AG04450 (cell line): ENCODE measurements at regions of chr22 and their contacts with region 1.

Region 1: GRCh38 chr22:29480512-29481264 is 670 bp downstream of the NEFH start:
- DNase-seq: no peak
- H3K4me3 ChIP-seq: peak overlapping the region; percentile 41
- H3K27ac ChIP-seq: no peak overlapping the region
- H3K27me3 ChIP-seq: peaks cover 48% of the 10 kb centered on the region
- CTCF ChIP-seq: no peak

Region 2: GRCh38 chr22:29524440-29525191 is 43.9 kb after region 1 on chr22:
- CTCF ChIA-PET with region 1: no interaction called
- POLR2A ChIA-PET with region 1: no interaction called
- DNase-seq: no peak
- H3K4me3 ChIP-seq: no peak overlapping the region
- H3K27ac ChIP-seq: no peak overlapping the region
- H3K27me3 ChIP-seq: no peaks in the 10 kb centered on the region
- CTCF ChIP-seq: peak; percentile 44

Region 3: GRCh38 chr22:29574762-29575450 is 94.2 kb after region 1 on chr22:
- CTCF ChIA-PET with region 1: interaction called, 10 read pairs
- POLR2A ChIA-PET with region 1: no interaction called
- DNase-seq: no peak
- H3K4me3 ChIP-seq: no peak overlapping the region
- H3K27ac ChIP-seq: no peak overlapping the region
- H3K27me3 ChIP-seq: no peaks in the 10 kb centered on the region
- CTCF ChIP-seq: no peak